Activated T-helper 2 cell treated with anti-CD3 and anti-CD28 coated beads, Interferon-gamma antibody, Interleukin-2, Interleukin-4, amounts not matched to agents 10 μg/mL and 5 μg/mL and 100 μg/mL, durations not matched to agents 14 hours and 24 hours and 36 hours (primary cell): ENCODE measurements at regions of chr6 and their contacts with region 1.

Region 1: DNA sequence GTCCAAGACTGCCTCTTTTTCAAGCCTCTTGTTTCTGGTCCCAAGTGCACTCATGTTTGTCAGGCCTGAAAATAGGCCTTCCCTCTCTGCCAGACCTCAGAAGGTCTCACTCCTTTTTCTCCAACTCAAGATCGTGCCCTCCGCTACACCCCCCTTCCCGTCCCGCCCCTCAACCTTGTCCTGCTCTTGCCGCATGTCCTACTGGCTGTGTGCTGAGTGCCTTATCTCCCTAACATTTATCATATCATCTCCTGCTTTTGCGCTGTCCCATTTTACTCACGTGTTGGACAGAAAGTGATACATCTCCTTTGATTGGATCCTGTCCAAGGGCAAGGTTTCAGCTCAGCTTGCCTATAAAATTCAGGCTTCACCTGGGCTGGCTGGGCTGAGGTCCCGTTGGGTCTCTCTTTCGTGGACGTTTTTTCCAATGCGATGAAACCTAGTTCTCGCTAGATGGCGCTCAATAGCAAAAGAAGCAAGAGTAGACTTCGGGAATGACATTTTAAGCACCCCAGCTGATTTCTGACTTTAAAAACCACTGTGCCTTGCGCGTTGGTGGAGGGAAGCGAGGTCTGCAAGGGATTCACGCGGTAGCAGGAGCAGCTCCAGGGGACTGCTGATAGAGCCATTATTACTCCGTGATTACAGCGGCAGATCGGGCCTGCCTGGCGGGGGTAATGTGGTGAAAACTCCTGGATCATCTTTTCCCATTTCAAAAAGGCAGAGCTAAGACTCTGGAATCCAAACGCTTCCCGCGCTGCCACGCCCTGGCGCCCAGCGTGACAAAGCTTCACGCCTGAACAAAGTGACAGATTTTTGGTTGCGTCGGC is 137.6 kb downstream of the IMPG1 start:
- DNase-seq: peak; percentile 10
- H3K4me3 Mint-ChIP-seq: no peak overlapping the region
- H3K27ac Mint-ChIP-seq: no peak overlapping the region
- H3K4me1 Mint-ChIP-seq: peaks cover 4% of the 10 kb centered on the region
- H3K27me3 Mint-ChIP-seq: peaks cover 13% of the 10 kb centered on the region

Region 2: DNA sequence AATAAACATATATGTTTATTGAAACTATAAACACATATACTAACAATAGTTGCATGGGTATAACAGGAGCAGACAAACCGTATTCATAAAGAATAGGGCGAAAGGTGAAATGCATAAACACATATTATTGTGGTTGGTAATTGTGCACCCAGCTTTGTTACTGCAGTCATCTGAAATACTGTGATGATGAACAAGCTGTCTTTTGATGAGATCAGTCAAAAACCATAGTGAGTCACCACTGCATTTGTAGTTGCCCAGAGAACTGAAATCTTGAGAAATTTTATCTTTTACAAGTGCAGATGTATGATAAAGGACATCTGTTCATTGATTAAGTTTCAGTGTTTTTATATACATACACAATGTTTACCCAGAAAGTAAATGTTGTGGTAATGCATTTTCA is 52.1 kb before region 1 on chr6:
- intact Hi-C with region 1: no loop called
- DNase-seq: no peak
- H3K4me3 Mint-ChIP-seq: no peak overlapping the region
- H3K27ac Mint-ChIP-seq: no peak overlapping the region
- H3K4me1 Mint-ChIP-seq: no peaks in the 10 kb centered on the region
- H3K27me3 Mint-ChIP-seq: no peaks in the 10 kb centered on the region

Region 3: GRCh38 chr6:75922226-75922625 is 12.6 kb before region 1 on chr6:
- intact Hi-C with region 1: no loop called
- DNase-seq: no peak
- H3K4me3 Mint-ChIP-seq: no peak overlapping the region
- H3K27ac Mint-ChIP-seq: no peak overlapping the region
- H3K4me1 Mint-ChIP-seq: no peaks in the 10 kb centered on the region
- H3K27me3 Mint-ChIP-seq: no peaks in the 10 kb centered on the region

Region 4: GRCh38 chr6:76861403-76861802 is 926.5 kb after region 1 on chr6:
- intact Hi-C with region 1: loop called (anchors 2 kb)
- DNase-seq: no peak
- H3K4me3 Mint-ChIP-seq: no peak overlapping the region
- H3K27ac Mint-ChIP-seq: no peak overlapping the region
- H3K4me1 Mint-ChIP-seq: no peaks in the 10 kb centered on the region
- H3K27me3 Mint-ChIP-seq: no peaks in the 10 kb centered on the region

Region 5: GRCh38 chr6:77457720-77458349 is 1523.0 kb after region 1 on chr6:
- intact Hi-C with region 1: loop called (anchors 5 kb)
- DNase-seq: no peak
- H3K4me3 Mint-ChIP-seq: no peak overlapping the region
- H3K27ac Mint-ChIP-seq: no peak overlapping the region
- H3K4me1 Mint-ChIP-seq: no peaks in the 10 kb centered on the region
- H3K27me3 Mint-ChIP-seq: peaks cover 14% of the 10 kb centered on the region